Activated T-helper 2 cell treated with anti-CD3 and anti-CD28 coated beads, Interferon-gamma antibody, Interleukin-2, Interleukin-4, amounts not matched to agents 10 μg/mL and 5 μg/mL and 100 μg/mL, durations not matched to agents 14 hours and 24 hours and 36 hours (primary cell): ENCODE measurements at regions of chr1 and their contacts with region 1.

Region 1: GRCh38 chr1:23613191-23614031 is 54.1 kb upstream of the ID3 start:
- DNase-seq: peak; percentile 58
- H3K4me3 Mint-ChIP-seq: peak overlapping the region; percentile 7
- H3K27ac Mint-ChIP-seq: peak overlapping the region; percentile 84
- H3K4me1 Mint-ChIP-seq: peaks cover 55% of the 10 kb centered on the region
- H3K27me3 Mint-ChIP-seq: no peaks in the 10 kb centered on the region

Region 2: GRCh38 chr1:23591460-23592208 is 21.8 kb before region 1 on chr1:
- intact Hi-C with region 1: loop called (anchors 2 kb)
- DNase-seq: no peak
- H3K4me3 Mint-ChIP-seq: peak overlapping the region; percentile 51
- H3K27ac Mint-ChIP-seq: peak overlapping the region; percentile 95
- H3K4me1 Mint-ChIP-seq: peaks cover 45% of the 10 kb centered on the region
- H3K27me3 Mint-ChIP-seq: no peaks in the 10 kb centered on the region

Region 3: DNA sequence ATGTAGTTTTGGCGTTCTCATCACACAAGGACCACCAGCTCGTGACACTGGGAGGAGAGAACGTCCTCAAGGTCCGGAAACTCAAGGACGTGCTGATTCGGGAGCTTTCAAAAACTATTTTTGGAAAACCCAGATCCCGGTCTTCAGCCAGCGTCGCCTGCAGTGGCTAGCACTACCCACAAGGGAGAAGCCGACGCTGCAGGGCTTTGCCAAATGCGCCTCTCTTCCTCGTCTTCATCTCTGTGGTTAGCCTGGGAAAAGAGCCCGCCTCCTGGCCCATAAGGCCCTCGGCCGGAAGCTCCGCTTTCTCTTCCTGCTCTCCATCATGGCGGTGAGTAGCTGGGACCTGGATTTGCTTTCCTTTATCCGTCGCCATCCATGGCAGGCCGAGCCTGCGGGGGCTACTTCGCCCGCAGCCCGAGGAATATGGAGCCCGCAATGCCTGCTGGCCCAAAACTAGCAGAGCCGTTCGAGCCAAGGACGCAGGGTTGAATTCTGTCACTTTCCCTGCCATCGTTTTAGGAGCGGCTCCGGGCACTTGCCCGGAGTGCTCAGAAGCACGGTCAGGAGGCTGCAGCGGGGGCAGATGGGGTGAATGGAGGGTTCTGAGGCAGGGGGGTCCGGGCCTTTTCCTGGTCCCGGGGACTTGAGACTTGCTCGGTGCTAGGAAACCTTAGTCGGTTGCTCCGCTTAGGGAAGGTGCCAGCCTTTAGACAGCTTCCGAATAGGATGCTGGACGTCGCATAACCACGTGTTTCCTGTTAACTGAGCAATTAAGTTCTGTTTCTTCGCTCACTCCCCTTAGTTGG is 78.3 kb after region 1 on chr1 and contains the start of gene RPL11:
- intact Hi-C with region 1: no loop called
- DNase-seq: peak; percentile 83
- H3K4me3 Mint-ChIP-seq: peak within 1 kb of the TSS; percentile 93
- H3K27ac Mint-ChIP-seq: peak within 1 kb of the TSS; percentile 90
- H3K4me1 Mint-ChIP-seq: peaks cover 38% of the 10 kb centered on the region
- H3K27me3 Mint-ChIP-seq: no peaks in the 10 kb centered on the region
- total RNA-seq, gene RPL11: 1,169 and 1,221 TPM in 2 replicates